ENCODE measurements at regions of chr18 and their contacts with region 1.

Region 1: DNA sequence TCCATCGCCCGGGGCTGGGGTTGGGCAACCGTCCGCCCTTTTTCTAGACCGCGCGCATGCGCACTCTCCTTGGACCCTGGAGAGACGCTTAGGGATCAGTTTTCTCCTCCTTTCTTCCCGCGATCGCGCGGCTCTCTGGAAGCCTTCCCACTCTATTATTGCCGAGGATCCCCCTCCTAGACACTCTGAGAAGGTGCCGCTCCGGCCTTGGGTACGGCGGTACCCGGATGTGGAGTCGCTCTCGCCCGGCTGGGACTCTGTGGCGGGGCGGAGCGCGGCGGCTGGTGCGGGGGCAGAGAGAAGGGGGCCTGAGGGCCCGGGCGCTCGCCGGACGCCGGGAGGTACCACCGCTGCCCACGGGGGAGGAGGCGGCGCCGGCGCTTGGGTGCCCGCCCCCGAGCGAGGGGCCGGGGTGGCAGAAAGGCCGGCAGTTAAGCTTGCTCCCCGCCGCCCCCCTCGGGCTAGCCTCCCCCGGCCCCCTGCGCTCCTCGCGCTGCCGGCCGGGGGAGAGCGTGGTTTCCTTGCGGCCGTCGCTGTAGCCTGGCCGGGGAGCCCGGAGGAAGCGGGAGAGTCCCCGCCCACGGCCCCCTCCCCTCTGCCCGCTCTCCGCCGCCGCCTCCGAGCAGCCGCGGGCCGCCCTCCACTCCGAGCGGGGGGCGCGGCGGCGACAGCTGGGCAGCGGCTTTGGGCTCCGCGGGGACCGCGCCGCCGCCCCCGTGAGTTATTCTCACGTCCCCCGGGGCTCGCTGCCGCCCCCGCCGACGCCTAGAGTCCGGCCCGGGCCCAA is at the start of gene MIB1:
- DNase-seq: peak; percentile 85
- H3K4me3 Mint-ChIP-seq: peak within 1 kb of the TSS; percentile 96
- H3K27ac Mint-ChIP-seq: peak within 1 kb of the TSS; percentile 96
- H3K4me1 Mint-ChIP-seq: peaks cover 29% of the 10 kb centered on the region
- H3K27me3 Mint-ChIP-seq: peaks cover 5% of the 10 kb centered on the region
- total RNA-seq, gene MIB1: 35.7 and 36.7 TPM in 2 replicates

Region 2: GRCh38 chr18:21111341-21112139 is 629.4 kb before region 1 on chr18 and contains the start of gene ROCK1:
- intact Hi-C with region 1: loop called (anchors 2 kb)
- DNase-seq: peak; percentile 99
- H3K4me3 Mint-ChIP-seq: no peak within 1 kb of the TSS
- H3K27ac Mint-ChIP-seq: peak within 1 kb of the TSS; percentile 97
- H3K4me1 Mint-ChIP-seq: peaks cover 21% of the 10 kb centered on the region
- H3K27me3 Mint-ChIP-seq: peaks cover 3% of the 10 kb centered on the region
- total RNA-seq, gene ROCK1: 54.7 and 56.5 TPM in 2 replicates

Region 3: GRCh38 chr18:21600526-21601410 is 140.1 kb before region 1 on chr18 and contains the start of gene ESCO1:
- intact Hi-C with region 1: loop called (anchors 1 kb)
- DNase-seq: peak; percentile 98
- H3K4me3 Mint-ChIP-seq: peak within 1 kb of the TSS; percentile 94
- H3K27ac Mint-ChIP-seq: peak within 1 kb of the TSS; percentile 95
- H3K4me1 Mint-ChIP-seq: peaks cover 26% of the 10 kb centered on the region
- H3K27me3 Mint-ChIP-seq: no peaks in the 10 kb centered on the region
- total RNA-seq, gene ESCO1: 20.0 and 21.5 TPM in 2 replicates

Region 4: GRCh38 chr18:21612125-21612991 is 128.6 kb before region 1 on chr18 and contains the start of gene SNRPD1:
- intact Hi-C with region 1: loop called (anchors 1 kb)
- DNase-seq: peak; percentile 98
- H3K4me3 Mint-ChIP-seq: peak within 1 kb of the TSS; percentile 91
- H3K27ac Mint-ChIP-seq: peak within 1 kb of the TSS; percentile 98
- H3K4me1 Mint-ChIP-seq: peaks cover 23% of the 10 kb centered on the region
- H3K27me3 Mint-ChIP-seq: no peaks in the 10 kb centered on the region
- total RNA-seq, gene SNRPD1: 182 and 192 TPM in 2 replicates

Region 5: GRCh38 chr18:21682371-21683051 is 58.4 kb before region 1 on chr18:
- intact Hi-C with region 1: loop called (anchors 10 kb)
- DNase-seq: peak; percentile 80
- H3K4me3 Mint-ChIP-seq: no peak overlapping the region
- H3K27ac Mint-ChIP-seq: no peak overlapping the region
- H3K4me1 Mint-ChIP-seq: peaks cover 13% of the 10 kb centered on the region
- H3K27me3 Mint-ChIP-seq: no peaks in the 10 kb centered on the region

Region 6: GRCh38 chr18:21704603-21705364 is 36.1 kb before region 1 on chr18 and contains the start of gene ABHD3:
- intact Hi-C with region 1: loop called (anchors 1 kb)
- DNase-seq: peak; percentile 98
- H3K4me3 Mint-ChIP-seq: peak within 1 kb of the TSS; percentile 98
- H3K27ac Mint-ChIP-seq: peak within 1 kb of the TSS; percentile 96
- H3K4me1 Mint-ChIP-seq: peaks cover 26% of the 10 kb centered on the region
- H3K27me3 Mint-ChIP-seq: no peaks in the 10 kb centered on the region
- total RNA-seq, gene ABHD3: 29.3 and 31.1 TPM in 2 replicates

Region 7: DNA sequence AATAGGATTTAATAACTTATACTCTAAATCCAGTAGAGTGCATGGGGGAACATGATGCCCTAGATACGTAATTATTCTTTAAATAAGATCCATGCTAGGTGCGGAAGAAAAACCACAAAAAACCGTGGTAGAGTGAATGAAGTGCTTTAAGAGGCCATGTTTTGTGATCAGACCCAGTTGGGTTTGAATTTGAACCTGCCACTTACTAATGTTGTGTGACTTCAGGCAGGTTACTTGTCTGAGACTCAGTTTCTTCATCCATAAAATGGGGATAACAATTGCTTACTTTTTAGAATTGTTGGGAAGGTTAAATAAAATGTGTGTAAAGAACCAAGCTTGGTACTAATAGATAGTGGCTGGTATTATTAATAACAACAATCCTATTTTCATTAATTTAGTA is 16.9 kb after region 1 on chr18:
- intact Hi-C with region 1: no loop called
- DNase-seq: no peak
- H3K4me3 Mint-ChIP-seq: no peak overlapping the region
- H3K27ac Mint-ChIP-seq: no peak overlapping the region
- H3K4me1 Mint-ChIP-seq: peaks cover 4% of the 10 kb centered on the region
- H3K27me3 Mint-ChIP-seq: no peaks in the 10 kb centered on the region

Region 8: DNA sequence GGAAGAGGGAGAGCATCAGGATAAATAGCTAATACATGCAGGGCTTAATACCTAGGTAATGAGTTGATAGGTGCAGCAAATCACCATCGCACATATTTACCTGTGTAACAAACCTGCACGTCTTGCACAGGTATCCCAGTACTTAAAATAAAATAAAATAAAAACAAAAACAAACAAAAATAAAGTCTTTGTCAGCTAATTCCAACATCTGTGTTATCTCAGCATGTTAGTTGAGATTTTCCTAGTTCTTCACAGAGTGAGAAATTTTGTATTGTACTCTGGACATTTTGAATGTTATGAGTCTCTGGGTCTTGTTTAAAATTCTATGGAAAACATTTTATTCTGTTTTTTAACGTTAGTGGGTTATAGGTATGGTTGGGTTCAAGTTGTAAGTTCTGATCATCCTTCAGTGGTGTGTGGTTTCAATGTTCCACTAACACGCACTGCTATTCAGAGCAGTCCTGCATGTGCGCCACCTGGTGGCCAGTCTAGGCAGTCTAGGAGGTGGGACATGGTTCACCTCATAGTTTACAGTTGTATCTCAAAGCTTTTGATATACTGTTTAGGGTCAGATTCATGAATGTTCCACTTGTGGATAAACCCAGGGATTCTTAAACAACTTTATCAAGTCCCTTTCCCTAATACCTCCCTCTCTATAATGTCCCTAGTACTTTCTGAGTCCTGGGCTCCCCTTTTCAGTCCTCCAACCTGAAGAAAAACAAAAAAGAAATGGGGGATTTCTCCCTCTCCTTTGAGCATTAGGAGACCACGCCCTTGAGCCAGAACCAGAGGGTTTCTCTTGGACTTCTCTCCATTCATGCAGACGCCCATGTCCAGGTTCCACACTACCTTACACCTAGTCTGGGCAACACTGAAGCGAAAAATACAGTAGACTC is 215.1 kb after region 1 on chr18:
- intact Hi-C with region 1: no loop called
- DNase-seq: peak; percentile 93
- H3K4me3 Mint-ChIP-seq: no peak overlapping the region
- H3K27ac Mint-ChIP-seq: no peak overlapping the region
- H3K4me1 Mint-ChIP-seq: no peaks in the 10 kb centered on the region
- H3K27me3 Mint-ChIP-seq: peaks cover 16% of the 10 kb centered on the region

Measured in activated CD4-positive, alpha-beta T cell treated with anti-CD3 and anti-CD28 coated beads, Interleukin-2, amount 10 ng/mL, durations not matched to agents 24 days and 14 days (primary cell).